ENCODE measurements at regions of chr2 and their contacts with region 1.

Region 1: DNA sequence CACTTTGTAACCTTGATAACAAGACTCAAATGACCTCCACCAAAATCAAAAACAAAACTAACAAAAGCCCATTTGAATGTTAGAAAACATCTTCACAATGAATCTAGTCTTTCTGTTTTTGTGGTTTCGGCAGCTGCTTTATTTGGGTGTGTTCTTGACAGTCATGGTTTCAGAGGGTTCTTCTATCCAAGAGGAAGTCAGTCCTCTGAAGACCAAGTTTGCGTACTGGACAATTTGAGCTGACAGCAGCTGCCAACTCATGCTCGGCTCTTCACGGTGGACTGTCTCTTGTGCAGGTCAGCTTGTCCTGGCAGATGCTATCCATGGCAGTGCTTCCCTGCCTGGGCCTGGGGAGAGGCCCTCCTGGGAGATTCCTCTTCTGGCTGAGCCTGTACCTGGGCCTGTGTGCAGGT is 91.0 kb downstream of the TMEM17 start:
- DNase-seq: no peak
- H3K4me3 ChIP-seq: no peak overlapping the region
- CTCF ChIP-seq: no peak

Region 2: GRCh38 chr2:61910603-61911002 is 504.4 kb before region 1 on chr2:
- CTCF ChIA-PET with region 1: interaction called, 41 read pairs
- POLR2A ChIA-PET with region 1: no interaction called
- DNase-seq: no peak
- H3K4me3 ChIP-seq: no peak overlapping the region
- CTCF ChIP-seq: no peak

Region 3: DNA sequence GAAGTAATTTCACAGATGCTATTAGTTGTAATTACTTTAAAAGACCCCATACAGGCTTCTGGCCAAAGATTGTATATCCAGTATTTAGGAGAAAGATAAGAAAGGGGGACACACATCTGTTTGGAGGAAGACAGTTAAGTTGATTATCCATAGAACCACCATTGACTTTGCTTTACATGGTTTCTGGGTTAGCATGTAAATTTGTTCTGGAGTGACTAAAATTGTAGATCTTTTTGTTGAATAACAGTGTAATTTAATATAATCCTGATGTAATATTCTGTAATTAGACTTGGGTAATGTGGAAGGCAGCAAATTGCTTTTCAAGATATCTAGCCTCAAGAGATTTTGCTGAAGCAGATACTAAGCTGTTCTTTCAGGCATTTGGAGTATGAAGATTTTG is 492.3 kb before region 1 on chr2:
- CTCF ChIA-PET with region 1: interaction called, 41 read pairs
- POLR2A ChIA-PET with region 1: no interaction called
- DNase-seq: no peak
- H3K4me3 ChIP-seq: no peak overlapping the region
- CTCF ChIP-seq: no peak

Region 4: GRCh38 chr2:61993444-61994024 is 421.5 kb before region 1 on chr2:
- CTCF ChIA-PET with region 1: interaction called, 103 read pairs
- POLR2A ChIA-PET with region 1: no interaction called
- DNase-seq: peak; percentile 2
- H3K4me3 ChIP-seq: no peak overlapping the region
- CTCF ChIP-seq: peak; percentile 72

Region 5: GRCh38 chr2:62000538-62000937 is 414.5 kb before region 1 on chr2:
- CTCF ChIA-PET with region 1: interaction called, 103 read pairs
- POLR2A ChIA-PET with region 1: no interaction called
- DNase-seq: no peak
- H3K4me3 ChIP-seq: no peak overlapping the region
- CTCF ChIP-seq: no peak

Region 6: GRCh38 chr2:62398356-62398755 is 16.7 kb before region 1 on chr2:
- CTCF ChIA-PET with region 1: interaction called, 10 read pairs
- POLR2A ChIA-PET with region 1: no interaction called
- DNase-seq: no peak
- H3K4me3 ChIP-seq: no peak overlapping the region
- CTCF ChIP-seq: no peak

Measured in AG04449 (cell line).